ENCODE measurements at regions of chr20 and their contacts with region 1.

Region 1: GRCh38 chr20:31605031-31605901 is at the start of gene ID1:
- DNase-seq: peak; percentile 98 to 99 (median 98)
- ATAC-seq: peak; percentile 85 to 92
- H3K4me3 ChIP-seq: peak within 1 kb of the TSS; percentile 64
- H3K27ac ChIP-seq: peak within 1 kb of the TSS; percentile 95
- H3K4me1 ChIP-seq: no peaks in the 10 kb centered on the region
- H3K27me3 ChIP-seq: no peaks in the 10 kb centered on the region
- total RNA-seq, gene ID1: 122 to 188 (median 134) TPM

Region 2: GRCh38 chr20:31560094-31560899 is 45.0 kb before region 1 on chr20:
- intact Hi-C with region 1: loop called in 1 of 4 experiments (anchors 5 kb)
- DNase-seq: peak; percentile 76 to 87 (median 86)
- ATAC-seq: peak; percentile 17 to 47
- H3K4me3 ChIP-seq: no peak overlapping the region
- H3K27ac ChIP-seq: peak overlapping the region; percentile 45
- H3K4me1 ChIP-seq: peaks cover 3% of the 10 kb centered on the region
- H3K27me3 ChIP-seq: no peaks in the 10 kb centered on the region

Region 3: GRCh38 chr20:31566658-31567379 is 38.4 kb before region 1 on chr20:
- intact Hi-C with region 1: loop called in 3 of 4 experiments (anchors 2 to 5 kb)
- DNase-seq: peak in 2 of 3 donors; percentile 37 to 43
- ATAC-seq: no peak
- H3K4me3 ChIP-seq: no peak overlapping the region
- H3K27ac ChIP-seq: no peak overlapping the region
- H3K4me1 ChIP-seq: peaks cover 6% of the 10 kb centered on the region
- H3K27me3 ChIP-seq: no peaks in the 10 kb centered on the region

Region 4: GRCh38 chr20:31572701-31573554 is 32.3 kb before region 1 on chr20:
- intact Hi-C with region 1: loop called in 2 of 4 experiments (anchors 2 kb)
- DNase-seq: peak; percentile 97
- ATAC-seq: peak; percentile 90 to 91
- H3K4me3 ChIP-seq: peak overlapping the region; percentile 47
- H3K27ac ChIP-seq: peak overlapping the region; percentile 92
- H3K4me1 ChIP-seq: peaks cover 7% of the 10 kb centered on the region
- H3K27me3 ChIP-seq: no peaks in the 10 kb centered on the region

Region 5: GRCh38 chr20:31890646-31891045 is 285.4 kb after region 1 on chr20:
- intact Hi-C with region 1: no loop called
- DNase-seq: no peak
- ATAC-seq: no peak
- H3K4me3 ChIP-seq: no peak overlapping the region
- H3K27ac ChIP-seq: no peak overlapping the region
- H3K4me1 ChIP-seq: no peaks in the 10 kb centered on the region
- H3K27me3 ChIP-seq: no peaks in the 10 kb centered on the region